H1 (cell line): ENCODE measurements at regions of chr19 and their contacts with region 1.

Region 1: GRCh38 chr19:43425567-43426392 is 11.1 kb downstream of the TEX101 start:
- DNase-seq: no peak
- H3K4me3 ChIP-seq: no peak overlapping the region
- H3K27ac ChIP-seq: no peak overlapping the region
- H3K4me1 ChIP-seq: peaks cover 0 to 1% (median 0%) of the 10 kb centered on the region in 4 experiments; a peak in 2 of 7 replicates
- H3K27me3 ChIP-seq: no peaks in the 10 kb centered on the region
- CTCF ChIP-seq: peak in 2 of 3 experiments; percentile 56 to 63; a peak in 2 of 4 replicates
- EP300 ChIP-seq: no peak
- POLR2A ChIP-seq: no peak
- RAD21 ChIP-seq: peak; percentile 66 to 70

Region 2: DNA sequence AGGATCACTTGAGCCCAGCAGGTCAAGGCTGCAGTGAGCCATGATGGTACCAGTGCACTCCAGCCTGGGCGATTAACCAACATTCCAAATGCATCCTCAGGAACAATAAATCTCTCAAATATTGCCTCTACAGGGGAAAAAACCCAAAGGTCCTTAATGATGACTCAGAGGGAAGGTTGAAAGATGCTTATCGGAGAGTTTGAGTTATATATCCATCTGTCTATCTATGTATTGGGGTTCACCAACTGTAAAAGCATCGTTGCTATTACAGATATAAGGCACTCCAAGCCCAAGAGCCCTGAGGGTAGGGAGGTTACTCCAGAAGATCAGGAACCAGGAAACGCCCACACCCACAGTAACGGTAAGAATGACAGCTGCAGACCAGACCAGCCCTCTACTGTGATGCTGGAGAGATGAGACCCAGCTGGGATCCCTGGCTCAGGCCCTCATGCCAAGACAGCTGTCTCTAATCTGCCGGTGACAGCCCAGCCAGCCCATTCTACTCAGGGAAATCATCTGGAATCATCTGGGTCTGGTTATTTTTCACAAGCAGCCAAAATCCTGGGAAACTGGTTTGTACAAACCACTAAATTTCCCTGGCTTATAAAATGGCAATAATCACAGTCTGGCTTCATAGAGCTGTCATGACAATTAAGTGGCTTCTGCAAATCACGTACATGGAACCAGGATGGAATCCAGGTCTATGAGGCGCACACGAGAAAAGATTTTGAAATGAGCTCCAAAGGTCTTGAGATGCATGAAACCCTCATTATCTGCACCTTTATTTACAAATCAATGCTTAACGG is 12.7 kb after region 1 on chr19:
- CTCF ChIA-PET with region 1: interaction called, 35 read pairs
- POLR2A ChIA-PET with region 1: interaction called, 3 read pairs
- DNase-seq: no peak
- H3K4me3 ChIP-seq: no peak overlapping the region
- H3K27ac ChIP-seq: no peak overlapping the region
- H3K4me1 ChIP-seq: no peaks in the 10 kb centered on the region
- H3K27me3 ChIP-seq: no peaks in the 10 kb centered on the region
- CTCF ChIP-seq: no peak
- EP300 ChIP-seq: no peak
- POLR2A ChIP-seq: no peak
- RAD21 ChIP-seq: no peak